ENCODE measurements at regions of chrX and their contacts with region 1.

Region 1: GRCh38 chrX:10119399-10119990 is 37.3 kb upstream of the CLCN4 start:
- DNase-seq: peak; percentile 65
- H3K4me3 Mint-ChIP-seq: no peak overlapping the region
- H3K27ac Mint-ChIP-seq: peak overlapping the region; percentile 48
- H3K4me1 Mint-ChIP-seq: peaks cover 15% of the 10 kb centered on the region
- H3K27me3 Mint-ChIP-seq: no peaks in the 10 kb centered on the region

Region 2: DNA sequence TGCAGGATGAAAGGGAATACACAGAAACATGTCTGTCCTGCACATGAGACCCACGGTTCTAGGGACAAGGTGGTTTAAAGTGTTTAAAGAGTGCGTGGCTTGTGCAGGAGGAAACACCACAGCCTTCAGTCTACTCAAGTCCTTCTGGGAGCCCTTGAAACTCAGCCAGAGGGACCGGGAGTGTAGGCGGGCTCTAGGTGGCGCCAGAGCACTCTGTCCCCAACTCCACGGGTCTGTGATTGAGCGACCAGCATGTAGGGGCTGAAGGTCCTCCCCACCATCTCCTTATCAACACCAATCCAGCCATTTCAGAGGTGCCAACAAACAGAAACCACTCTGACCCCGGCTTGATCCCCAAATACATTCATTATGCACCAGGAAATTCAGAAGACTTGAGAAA is 234.3 kb before region 1 on chrX:
- intact Hi-C with region 1: loop called (anchors 1 kb)
- DNase-seq: peak; percentile 5
- H3K4me3 Mint-ChIP-seq: no peak overlapping the region
- H3K27ac Mint-ChIP-seq: no peak overlapping the region
- H3K4me1 Mint-ChIP-seq: no peaks in the 10 kb centered on the region
- H3K27me3 Mint-ChIP-seq: peaks cover 7% of the 10 kb centered on the region

Region 3: GRCh38 chrX:9923357-9923756 is 196.1 kb before region 1 on chrX:
- intact Hi-C with region 1: no loop called
- DNase-seq: no peak
- H3K4me3 Mint-ChIP-seq: no peak overlapping the region
- H3K27ac Mint-ChIP-seq: no peak overlapping the region
- H3K4me1 Mint-ChIP-seq: no peaks in the 10 kb centered on the region
- H3K27me3 Mint-ChIP-seq: no peaks in the 10 kb centered on the region

Region 4: GRCh38 chrX:9988762-9989161 is 130.7 kb before region 1 on chrX:
- intact Hi-C with region 1: loop called (anchors 1 kb)
- DNase-seq: no peak
- H3K4me3 Mint-ChIP-seq: no peak overlapping the region
- H3K27ac Mint-ChIP-seq: no peak overlapping the region
- H3K4me1 Mint-ChIP-seq: no peaks in the 10 kb centered on the region
- H3K27me3 Mint-ChIP-seq: no peaks in the 10 kb centered on the region

Region 5: GRCh38 chrX:10071451-10072144 is 47.9 kb before region 1 on chrX:
- intact Hi-C with region 1: no loop called
- DNase-seq: no peak
- H3K4me3 Mint-ChIP-seq: no peak overlapping the region
- H3K27ac Mint-ChIP-seq: peak overlapping the region; percentile 34
- H3K4me1 Mint-ChIP-seq: peaks cover 9% of the 10 kb centered on the region
- H3K27me3 Mint-ChIP-seq: no peaks in the 10 kb centered on the region

Region 6: DNA sequence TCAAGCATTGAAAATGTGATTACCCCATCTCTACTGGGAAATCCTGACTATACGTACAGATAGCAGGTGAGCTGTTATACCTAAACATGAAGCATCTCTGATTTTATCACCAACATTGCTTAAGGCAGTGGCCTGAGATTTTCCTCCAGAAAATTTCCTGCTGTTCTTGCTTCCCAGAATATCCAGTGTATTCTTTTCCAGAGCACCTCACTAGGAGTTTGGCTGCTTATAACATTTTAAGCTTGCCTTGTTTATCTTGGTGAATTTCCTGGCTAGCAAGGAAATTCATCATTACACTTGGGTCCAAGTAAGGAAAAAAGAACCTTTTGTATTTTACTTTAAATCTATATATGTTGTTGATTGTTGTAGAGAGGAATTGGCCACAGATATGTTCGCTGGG is 35.7 kb before region 1 on chrX:
- intact Hi-C with region 1: loop called (anchors 2 kb)
- DNase-seq: no peak
- H3K4me3 Mint-ChIP-seq: no peak overlapping the region
- H3K27ac Mint-ChIP-seq: no peak overlapping the region
- H3K4me1 Mint-ChIP-seq: peaks cover 40% of the 10 kb centered on the region
- H3K27me3 Mint-ChIP-seq: no peaks in the 10 kb centered on the region

Region 7: DNA sequence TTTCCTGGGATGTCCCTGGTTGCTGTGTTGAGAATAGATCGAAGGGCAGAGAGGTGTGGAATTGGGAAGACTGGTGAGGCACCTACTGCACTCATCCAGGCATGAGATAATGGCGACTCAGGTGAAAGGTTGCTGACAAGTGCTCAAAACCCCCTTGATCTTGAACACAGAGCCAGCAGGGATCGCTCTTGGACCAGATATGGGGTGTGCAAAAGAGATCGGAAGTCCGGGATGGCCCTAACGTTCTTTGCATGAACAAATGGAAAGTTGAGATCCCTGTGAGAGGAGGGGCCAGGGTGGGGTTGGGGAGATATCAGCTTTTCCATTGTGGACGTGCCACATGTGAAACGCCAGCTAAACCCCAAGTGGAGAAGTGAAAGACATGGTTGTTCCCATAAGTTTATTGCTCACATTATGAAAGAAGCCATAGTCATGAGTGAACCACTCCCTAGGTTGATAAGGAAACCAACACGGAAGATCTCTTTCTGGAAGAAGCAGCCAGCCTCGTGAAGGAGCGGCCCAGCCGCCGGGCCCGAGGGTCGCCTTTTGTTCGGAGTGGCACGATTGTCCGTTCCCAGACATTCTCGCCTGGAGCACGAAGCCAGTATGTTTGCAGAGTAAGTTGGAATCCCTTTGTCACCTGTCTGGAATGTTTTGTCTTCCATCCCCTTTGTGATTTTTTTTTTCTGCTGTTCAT is 14.6 kb after region 1 on chrX:
- intact Hi-C with region 1: no loop called
- DNase-seq: no peak
- H3K4me3 Mint-ChIP-seq: no peak overlapping the region
- H3K27ac Mint-ChIP-seq: no peak overlapping the region
- H3K4me1 Mint-ChIP-seq: no peaks in the 10 kb centered on the region
- H3K27me3 Mint-ChIP-seq: no peaks in the 10 kb centered on the region

Measured in activated T-helper 1 cell treated with anti-CD3 and anti-CD28 coated beads, Interleukin-12 subunit alpha, Interleukin-12 subunit beta, Interleukin-2, Interleukin-4 antibody, amounts not matched to agents 30 ng/mL and 10 ng/mL and 1 ng/mL, durations not matched to agents 14 hours and 24 hours and 36 hours (primary cell).